ENCODE measurements at regions of chr21 and their contacts with region 1.

Region 1: GRCh38 chr21:20639026-20639425 is 359.2 kb upstream of the NCAM2 start:
- DNase-seq: no peak
- ATAC-seq: no peak
- H3K4me3 ChIP-seq: no peak overlapping the region
- H3K4me3 Mint-ChIP-seq: no peak overlapping the region
- H3K27ac ChIP-seq: no peak overlapping the region
- H3K27ac Mint-ChIP-seq: no peak overlapping the region
- H3K4me1 ChIP-seq: no peaks in the 10 kb centered on the region
- H3K4me1 Mint-ChIP-seq: no peaks in the 10 kb centered on the region
- H3K27me3 ChIP-seq: no peaks in the 10 kb centered on the region
- H3K27me3 Mint-ChIP-seq: no peaks in the 10 kb centered on the region
- CTCF ChIP-seq: no peak

Region 2: DNA sequence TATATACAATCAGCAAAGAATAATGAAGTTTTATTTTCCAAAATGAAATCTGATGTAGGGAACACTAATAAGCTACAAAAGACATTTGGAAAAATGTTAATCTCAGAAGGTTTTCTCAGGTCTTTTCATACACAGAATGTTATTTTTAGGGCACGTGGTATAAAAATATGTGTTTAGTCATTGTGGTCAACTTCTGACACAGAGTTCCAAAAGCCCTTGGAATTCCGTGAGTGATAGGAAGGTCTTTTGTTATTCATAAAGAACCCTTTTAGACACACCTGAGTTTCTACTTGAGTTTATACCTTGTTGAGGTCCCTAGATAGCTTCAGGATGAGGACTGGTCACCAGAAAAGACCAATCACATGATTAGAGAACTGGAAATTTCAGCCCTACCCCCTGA is 81.6 kb after region 1 on chr21:
- CTCF ChIA-PET with region 1: no interaction called
- POLR2A ChIA-PET with region 1: no interaction called
- intact Hi-C with region 1: loop called in 1 of 2 experiments (anchors 1 kb)
- DNase-seq: no peak
- ATAC-seq: no peak
- H3K4me3 ChIP-seq: no peak overlapping the region
- H3K4me3 Mint-ChIP-seq: no peak overlapping the region
- H3K27ac ChIP-seq: no peak overlapping the region
- H3K27ac Mint-ChIP-seq: no peak overlapping the region
- H3K4me1 ChIP-seq: no peaks in the 10 kb centered on the region
- H3K4me1 Mint-ChIP-seq: no peaks in the 10 kb centered on the region
- H3K27me3 ChIP-seq: no peaks in the 10 kb centered on the region
- H3K27me3 Mint-ChIP-seq: no peaks in the 10 kb centered on the region
- CTCF ChIP-seq: no peak